PC-9 (cell line): ENCODE measurements at regions of chr6 and their contacts with region 1.

Region 1: GRCh38 chr6:42726485-42727086 is 4.2 kb upstream of the PRPH2 start:
- DNase-seq: peak in 1 of 2 experiments; percentile 47
- H3K4me3 ChIP-seq: no peak overlapping the region
- H3K27ac ChIP-seq: no peak overlapping the region
- H3K4me1 ChIP-seq: 0 out of 2 replicates have a peak, but pooled peaks cover 6% of the 10 kb centered on the region
- H3K27me3 ChIP-seq: no peaks in the 10 kb centered on the region
- CTCF ChIP-seq: peak; percentile 95

Region 2: DNA sequence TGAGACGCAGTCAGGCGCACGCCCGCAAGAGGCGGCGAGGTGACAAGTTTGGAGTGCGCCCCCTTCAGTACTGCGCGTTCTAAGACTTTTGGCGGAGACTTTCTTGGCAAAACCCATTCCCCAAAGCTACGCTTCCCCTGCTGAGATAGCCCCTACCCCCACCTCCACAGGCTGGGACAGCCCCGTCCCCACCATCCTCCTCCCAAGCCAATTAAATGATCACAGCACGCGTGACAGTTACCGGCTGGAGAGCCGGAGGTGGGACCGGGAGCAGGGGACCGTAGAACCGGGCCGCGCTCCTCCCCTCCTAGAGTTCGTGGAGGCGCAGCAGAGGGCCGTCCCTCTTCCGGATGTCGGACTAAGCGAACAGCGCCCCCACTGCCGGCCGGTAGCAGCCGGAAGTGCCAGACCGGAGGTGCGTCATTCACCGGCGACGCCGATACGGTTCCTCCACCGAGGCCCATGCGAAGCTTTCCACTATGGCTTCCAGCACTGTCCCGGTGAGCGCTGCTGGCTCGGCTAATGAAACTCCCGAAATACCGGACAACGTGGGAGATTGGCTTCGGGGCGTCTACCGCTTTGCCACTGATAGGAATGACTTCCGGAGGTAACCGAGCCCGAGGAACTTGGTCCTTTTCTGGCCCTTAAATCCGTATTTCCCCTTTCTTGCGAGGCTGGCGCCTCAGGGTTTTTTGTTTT is 939.2 kb before region 1 on chr6 and contains the start of gene TOMM6:
- CTCF ChIA-PET with region 1: no interaction called
- POLR2A ChIA-PET with region 1: no interaction called
- intact Hi-C with region 1: loop called (anchors 10 kb)
- DNase-seq: peak; percentile 83 to 92
- H3K4me3 ChIP-seq: peak within 1 kb of the TSS; percentile 100
- H3K27ac ChIP-seq: peak within 1 kb of the TSS; percentile 91
- H3K4me1 ChIP-seq: peaks cover 42% of the 10 kb centered on the region
- H3K27me3 ChIP-seq: no peaks in the 10 kb centered on the region
- CTCF ChIP-seq: peak; percentile 88
- total RNA-seq, gene TOMM6: 143 and 170 TPM in 2 replicates

Region 3: GRCh38 chr6:42522942-42523814 is 203.4 kb before region 1 on chr6:
- CTCF ChIA-PET with region 1: no interaction called
- POLR2A ChIA-PET with region 1: no interaction called
- intact Hi-C with region 1: no loop called
- DNase-seq: no peak
- H3K4me3 ChIP-seq: no peak overlapping the region
- H3K27ac ChIP-seq: no peak overlapping the region
- H3K4me1 ChIP-seq: peaks cover 37% of the 10 kb centered on the region
- H3K27me3 ChIP-seq: no peaks in the 10 kb centered on the region
- CTCF ChIP-seq: no peak

Region 4: DNA sequence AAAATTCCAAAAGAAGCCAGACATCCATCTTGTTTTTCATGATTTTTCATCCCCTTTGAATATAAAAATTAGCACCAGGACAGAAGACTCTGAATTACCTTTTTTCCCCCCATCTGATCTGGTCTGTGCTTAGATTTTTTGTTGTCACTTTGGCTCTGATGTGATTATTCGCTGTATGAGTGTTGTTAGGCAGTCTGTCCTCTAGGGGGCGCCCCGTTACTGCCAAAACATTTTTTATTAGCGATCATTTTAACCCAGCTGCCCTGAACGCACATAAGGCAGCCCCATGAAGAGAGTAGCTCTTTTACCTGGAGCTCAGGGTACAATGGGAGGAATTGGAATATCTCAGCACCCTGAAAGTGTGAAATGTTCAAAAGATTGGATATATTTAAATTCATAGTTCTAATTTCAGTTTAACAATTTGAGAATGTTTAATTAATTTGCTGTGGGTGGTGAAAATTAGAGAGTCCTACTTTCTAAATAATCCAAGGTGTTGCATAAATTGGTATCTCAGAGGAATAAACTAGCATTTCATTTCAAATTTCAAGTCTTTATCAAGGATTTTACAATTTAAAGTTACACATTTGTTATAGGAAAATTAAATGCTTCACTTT is 64.9 kb before region 1 on chr6:
- CTCF ChIA-PET with region 1: interaction called, 5 read pairs
- POLR2A ChIA-PET with region 1: no interaction called
- intact Hi-C with region 1: loop called (anchors 1 kb)
- DNase-seq: peak; percentile 45 to 63
- H3K4me3 ChIP-seq: no peak overlapping the region
- H3K27ac ChIP-seq: no peak overlapping the region
- H3K4me1 ChIP-seq: no peaks in the 10 kb centered on the region
- H3K27me3 ChIP-seq: no peaks in the 10 kb centered on the region
- CTCF ChIP-seq: peak; percentile 93

Region 5: DNA sequence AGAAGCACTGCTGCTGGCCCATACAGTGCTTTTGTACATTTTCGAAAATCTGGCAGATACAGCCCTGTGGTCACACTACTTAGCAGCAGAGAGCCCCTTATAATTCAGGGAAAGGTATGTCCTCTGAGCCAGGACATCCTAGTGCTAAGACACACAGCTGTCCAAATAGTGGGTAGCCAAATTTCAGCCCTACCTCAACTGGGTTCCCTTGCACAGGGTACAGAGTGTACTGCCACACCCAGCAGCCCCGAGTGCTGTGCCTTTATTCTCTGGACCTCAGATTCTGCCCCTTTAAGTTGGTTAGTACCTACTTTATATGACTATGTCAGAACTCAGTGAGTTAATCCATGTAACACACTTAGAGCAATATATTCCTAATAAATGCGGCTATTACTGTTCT is 51.8 kb before region 1 on chr6:
- CTCF ChIA-PET with region 1: no interaction called
- POLR2A ChIA-PET with region 1: no interaction called
- intact Hi-C with region 1: loop called (anchors 5 kb)
- DNase-seq: no peak
- H3K4me3 ChIP-seq: no peak overlapping the region
- H3K27ac ChIP-seq: no peak overlapping the region
- H3K4me1 ChIP-seq: no peaks in the 10 kb centered on the region
- H3K27me3 ChIP-seq: no peaks in the 10 kb centered on the region
- CTCF ChIP-seq: no peak

Region 6: GRCh38 chr6:42692137-42692911 is 34.3 kb before region 1 on chr6:
- CTCF ChIA-PET with region 1: interaction called, 5 read pairs
- POLR2A ChIA-PET with region 1: no interaction called
- intact Hi-C with region 1: loop called (anchors 5 kb)
- DNase-seq: peak in 1 of 2 experiments; percentile 36
- H3K4me3 ChIP-seq: no peak overlapping the region
- H3K27ac ChIP-seq: no peak overlapping the region
- H3K4me1 ChIP-seq: no peaks in the 10 kb centered on the region
- H3K27me3 ChIP-seq: no peaks in the 10 kb centered on the region
- CTCF ChIP-seq: no peak